SK-N-SH (cell line): ENCODE measurements at regions of chr3 and their contacts with region 1.

Region 1: DNA sequence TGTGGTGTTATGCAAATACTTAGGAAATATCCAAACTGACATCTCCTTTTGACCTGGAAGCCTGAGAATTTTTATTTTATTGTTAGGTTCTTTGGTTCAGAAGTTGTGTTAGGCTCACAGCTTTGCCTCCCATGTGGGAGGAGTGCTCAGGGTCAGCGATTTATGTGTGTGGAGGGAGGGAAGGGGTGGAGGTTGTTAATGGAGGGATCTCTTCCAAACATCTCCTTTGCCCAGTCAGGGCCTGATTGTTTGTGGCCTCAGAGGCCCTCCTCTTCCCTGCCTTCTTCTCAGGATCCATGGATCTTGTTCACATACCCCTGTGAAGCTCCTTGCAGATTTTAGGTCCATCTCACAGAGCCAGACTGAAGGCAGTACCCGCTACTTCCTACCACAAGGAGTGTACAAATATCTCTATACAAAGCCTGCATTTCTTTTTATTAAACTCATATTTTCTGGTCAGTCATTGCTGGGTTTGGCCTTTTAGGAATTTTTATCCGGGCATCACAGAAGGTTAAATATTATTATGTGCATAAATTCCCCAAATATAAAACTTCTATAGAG is 40.3 kb downstream of the BBX start:
- DNase-seq: no peak
- H3K4me3 ChIP-seq: no peak overlapping the region
- H3K27ac ChIP-seq: no peak overlapping the region
- H3K4me1 ChIP-seq: peaks cover 0 to 5% of the 10 kb centered on the region in 2 experiments; a peak in 2 of 4 replicates
- H3K27me3 ChIP-seq: no peaks in the 10 kb centered on the region
- CTCF ChIP-seq: no peak
- EP300 ChIP-seq: no peak
- RAD21 ChIP-seq: no peak

Region 2: DNA sequence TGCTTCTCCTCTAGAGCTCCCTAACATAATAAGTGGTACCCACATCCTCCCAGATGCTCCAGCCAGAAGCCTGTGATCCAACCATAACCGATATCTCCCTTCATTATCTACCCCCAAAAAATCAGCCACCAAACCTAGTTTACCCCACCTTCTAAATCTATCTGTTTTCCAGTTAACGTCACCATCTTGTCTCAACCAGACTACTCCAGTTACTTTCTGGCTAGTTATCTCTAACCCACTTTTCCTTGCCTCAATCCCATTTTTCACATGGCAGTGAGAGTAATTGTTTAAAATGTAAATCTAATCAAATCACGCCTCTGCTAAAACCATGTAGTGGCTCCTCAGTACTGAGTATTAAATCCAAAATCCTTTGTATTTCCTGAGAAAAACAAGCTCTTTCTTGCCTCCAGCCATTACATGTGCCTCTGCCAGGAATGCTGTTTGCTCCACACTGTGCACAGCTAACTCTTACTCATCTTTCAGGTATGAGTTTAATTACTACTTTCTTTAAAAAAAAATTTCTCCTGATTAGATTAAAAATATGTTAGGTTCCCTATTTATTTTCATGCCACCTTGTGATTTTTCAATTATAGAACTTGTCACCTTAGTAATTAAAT is 170.4 kb before region 1 on chr3:
- CTCF ChIA-PET with region 1: no interaction called
- POLR2A ChIA-PET with region 1: no interaction called
- DNase-seq: no peak
- H3K4me3 ChIP-seq: no peak overlapping the region
- H3K27ac ChIP-seq: peak overlapping the region in 1 of 2 experiments; percentile 40; a peak in 2 of 4 replicates
- H3K4me1 ChIP-seq: peaks cover 0 to 3% of the 10 kb centered on the region in 2 experiments; a peak in 2 of 4 replicates
- H3K27me3 ChIP-seq: no peaks in the 10 kb centered on the region
- CTCF ChIP-seq: no peak
- EP300 ChIP-seq: no peak
- RAD21 ChIP-seq: no peak

Region 3: GRCh38 chr3:107574650-107575049 is 11.6 kb after region 1 on chr3:
- CTCF ChIA-PET with region 1: interaction called, 12 read pairs
- POLR2A ChIA-PET with region 1: no interaction called
- DNase-seq: peak; percentile 35
- H3K4me3 ChIP-seq: no peak overlapping the region
- H3K27ac ChIP-seq: no peak overlapping the region
- H3K4me1 ChIP-seq: peaks cover 0 to 4% of the 10 kb centered on the region in 2 experiments; a peak in 1 of 4 replicates
- H3K27me3 ChIP-seq: no peaks in the 10 kb centered on the region
- CTCF ChIP-seq: peak; percentile 68
- EP300 ChIP-seq: no peak
- RAD21 ChIP-seq: peak; percentile 85

Region 4: GRCh38 chr3:107604057-107604822 is 41.2 kb after region 1 on chr3:
- CTCF ChIA-PET with region 1: no interaction called
- POLR2A ChIA-PET with region 1: no interaction called
- DNase-seq: no peak
- H3K4me3 ChIP-seq: no peak overlapping the region
- H3K27ac ChIP-seq: no peak overlapping the region
- H3K4me1 ChIP-seq: peaks cover 4% of the 10 kb centered on the region in 2 experiments; a peak in 3 of 4 replicates
- H3K27me3 ChIP-seq: no peaks in the 10 kb centered on the region
- CTCF ChIP-seq: no peak
- EP300 ChIP-seq: no peak
- RAD21 ChIP-seq: no peak